ENCODE measurements at regions of chr1 and their contacts with region 1.

Region 1: DNA sequence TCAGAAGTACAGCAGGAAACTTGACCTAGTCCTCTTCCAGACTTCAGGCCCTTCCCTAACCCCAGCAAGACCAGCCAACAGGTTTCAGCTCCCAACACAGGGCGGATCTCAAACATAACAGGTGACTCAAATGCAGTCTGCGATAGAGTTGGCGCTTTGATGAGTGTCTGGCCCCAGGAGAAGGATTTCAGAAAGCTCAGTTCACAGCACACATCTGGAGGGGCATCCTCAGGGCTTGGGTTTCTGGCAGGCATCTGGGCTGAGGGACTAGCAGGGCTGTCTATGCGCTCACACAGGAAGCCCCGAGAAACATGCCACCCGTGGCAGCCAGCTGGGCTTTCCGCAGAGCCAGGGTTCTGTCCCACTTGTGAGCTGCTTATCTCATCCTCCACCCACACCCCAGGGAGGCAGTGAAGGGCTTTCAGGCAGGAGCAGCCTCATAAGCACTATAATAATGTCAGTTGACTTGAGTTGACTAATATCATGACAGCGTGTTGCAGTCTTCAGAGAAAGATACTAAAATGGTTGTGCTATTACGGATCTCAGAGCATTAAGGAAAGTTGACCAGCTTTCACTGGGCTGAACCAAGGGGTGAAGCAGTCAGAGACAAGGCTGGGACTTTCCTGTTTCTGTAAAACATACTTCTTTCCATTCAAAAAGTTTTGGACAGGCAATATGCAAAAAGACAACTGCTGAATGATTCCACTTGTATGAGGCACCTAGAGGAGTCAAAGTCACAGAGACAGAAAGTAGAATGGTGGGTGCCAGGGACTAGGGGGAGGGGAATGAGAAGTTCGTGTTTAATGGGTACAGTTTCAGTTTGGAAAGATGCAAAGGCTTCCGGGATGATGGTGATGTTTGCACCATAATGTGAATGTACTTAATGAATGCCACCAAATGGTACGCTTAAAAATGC is 233.0 kb upstream of the IRF2BP2 start:
- DNase-seq: peak; percentile 95
- ATAC-seq: peak; percentile 74
- H3K4me3 ChIP-seq: peak overlapping the region; percentile 58
- H3K27ac ChIP-seq: peak overlapping the region; percentile 97
- H3K4me1 ChIP-seq: peaks cover 57% of the 10 kb centered on the region
- H3K27me3 ChIP-seq: no peaks in the 10 kb centered on the region
- CTCF ChIP-seq: no peak; a peak in 1 of 6 replicates
- EP300 ChIP-seq: peak in 1 of 2 experiments; percentile 47; a peak in 1 of 4 replicates
- POLR2A ChIP-seq: peak; percentile 81
- RAD21 ChIP-seq: peak; percentile 56

Region 2: DNA sequence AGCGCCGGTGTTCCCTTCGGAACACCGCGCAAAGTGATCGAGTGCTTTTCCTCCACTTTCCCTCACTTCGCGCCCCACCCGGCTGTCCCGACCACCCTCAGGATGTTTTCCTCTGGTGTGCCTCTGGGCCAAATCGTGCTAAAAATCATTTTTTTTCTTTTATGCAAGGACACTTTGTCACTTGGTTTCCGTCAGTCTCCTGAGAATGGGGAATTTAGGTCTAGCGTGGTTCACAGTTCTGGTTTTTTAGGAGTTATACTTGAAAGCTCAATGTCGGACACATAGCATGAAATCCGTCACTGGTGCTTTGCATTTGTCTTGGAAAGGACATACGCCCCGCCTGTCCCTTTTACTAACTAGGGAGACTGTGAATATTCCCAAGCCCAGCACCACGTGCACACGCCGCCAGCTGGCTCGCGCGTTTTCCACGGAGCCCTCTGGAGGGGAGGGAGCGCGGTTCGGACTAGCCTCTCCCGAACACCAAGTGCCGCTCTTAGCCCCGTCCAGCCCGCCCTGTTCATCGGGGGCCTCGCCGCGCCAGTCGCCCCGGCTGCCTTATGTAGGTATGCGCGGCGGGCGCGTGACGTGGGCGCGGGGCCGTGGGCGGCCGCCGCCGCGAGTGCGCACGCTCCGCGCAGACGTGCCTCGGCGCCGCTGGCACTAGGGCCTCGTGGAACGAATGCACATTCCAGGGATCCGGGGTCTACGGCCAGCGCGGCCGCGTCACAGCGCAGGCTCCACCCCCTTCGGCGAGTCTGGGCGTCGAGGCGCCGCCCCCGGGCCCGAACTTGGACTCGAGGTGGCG is 232.4 kb before region 1 on chr1:
- CTCF ChIA-PET with region 1: interaction called, 12 read pairs
- POLR2A ChIA-PET with region 1: interaction called, 14 read pairs
- RAD21 ChIA-PET with region 1: interaction called, 100 read pairs
- SMC1A ChIA-PET with region 1: interaction called, 81 read pairs
- in situ Hi-C with region 1: loop called (anchors 5 kb)
- intact Hi-C with region 1: loop called (anchors 2 kb)
- DNase-seq: peak; percentile 75
- ATAC-seq: peak; percentile 54
- H3K4me3 ChIP-seq: peak overlapping the region; percentile 74
- H3K27ac ChIP-seq: peak overlapping the region; percentile 98
- H3K4me1 ChIP-seq: peaks cover 24% of the 10 kb centered on the region
- H3K27me3 ChIP-seq: no peaks in the 10 kb centered on the region
- CTCF ChIP-seq: no peak
- EP300 ChIP-seq: no peak; a peak in 2 of 4 replicates
- POLR2A ChIP-seq: peak; percentile 97
- RAD21 ChIP-seq: no peak

Region 3: DNA sequence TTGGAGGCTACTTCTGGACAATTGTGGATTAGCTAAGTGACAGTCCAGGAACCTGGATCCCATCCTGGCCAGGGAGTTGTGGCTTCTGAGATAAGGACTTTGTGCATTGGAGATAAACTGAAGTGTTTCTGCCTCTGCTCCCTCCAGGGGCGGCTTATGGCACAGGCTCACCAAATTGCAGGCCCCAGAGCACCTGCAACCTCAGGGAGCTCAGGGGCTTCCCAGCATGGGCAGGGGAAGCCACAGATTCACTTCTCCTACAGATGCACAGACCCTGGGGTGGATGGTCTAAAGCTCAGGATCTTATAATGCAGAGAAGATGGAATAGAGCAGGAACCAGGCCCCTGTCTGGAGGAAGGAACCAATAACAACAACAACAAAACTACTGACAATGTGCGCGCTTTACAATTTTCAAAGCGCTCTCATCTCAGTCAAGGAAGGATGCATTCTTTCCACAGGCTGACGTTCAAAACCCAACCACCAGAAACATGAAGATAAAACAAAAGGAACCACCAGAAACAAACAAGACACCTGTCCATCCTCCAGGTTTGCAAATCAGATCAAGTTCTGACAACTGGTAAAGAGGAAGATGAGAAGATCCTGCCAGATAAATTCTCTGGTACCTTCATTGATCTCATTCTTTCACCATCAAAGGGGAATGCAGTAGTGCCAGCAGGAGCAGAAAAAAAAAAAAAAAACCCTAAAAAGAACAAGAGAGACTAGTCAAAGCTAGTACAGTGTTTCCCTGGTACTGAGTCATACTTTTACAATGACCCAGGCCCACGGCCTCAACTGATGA is 112.0 kb before region 1 on chr1:
- CTCF ChIA-PET with region 1: interaction called, 3 read pairs
- POLR2A ChIA-PET with region 1: interaction called, 5 read pairs
- RAD21 ChIA-PET with region 1: interaction called, 66 read pairs
- SMC1A ChIA-PET with region 1: interaction called, 26 read pairs
- in situ Hi-C with region 1: loop called (anchors 25 kb)
- intact Hi-C with region 1: loop called (anchors 1 kb)
- DNase-seq: peak; percentile 68
- ATAC-seq: peak; percentile 80
- H3K4me3 ChIP-seq: peak overlapping the region; percentile 17; the same call in 1 of the 2 replicates
- H3K27ac ChIP-seq: peak overlapping the region; percentile 82
- H3K4me1 ChIP-seq: peaks cover 59% of the 10 kb centered on the region
- H3K27me3 ChIP-seq: no peaks in the 10 kb centered on the region
- CTCF ChIP-seq: peak; percentile 17 to 30 (median 28); a peak in 3 of 6 replicates
- EP300 ChIP-seq: peak; percentile 53 to 57; a peak in 3 of 4 replicates
- POLR2A ChIP-seq: no peak
- RAD21 ChIP-seq: peak; percentile 46; the same call in 1 of the 2 replicates

Region 4: GRCh38 chr1:234875953-234876855 is 33.2 kb after region 1 on chr1:
- CTCF ChIA-PET with region 1: interaction called, 8 read pairs
- POLR2A ChIA-PET with region 1: interaction called, 7 read pairs
- RAD21 ChIA-PET with region 1: interaction called, 26 read pairs
- SMC1A ChIA-PET with region 1: interaction called, 30 read pairs
- in situ Hi-C with region 1: no loop called
- intact Hi-C with region 1: loop called (anchors 2 kb)
- DNase-seq: no peak
- ATAC-seq: peak; percentile 50
- H3K4me3 ChIP-seq: no peak overlapping the region
- H3K27ac ChIP-seq: no peak overlapping the region
- H3K4me1 ChIP-seq: peaks cover 40% of the 10 kb centered on the region
- H3K27me3 ChIP-seq: no peaks in the 10 kb centered on the region
- CTCF ChIP-seq: no peak
- EP300 ChIP-seq: no peak
- POLR2A ChIP-seq: no peak
- RAD21 ChIP-seq: no peak

Region 5: DNA sequence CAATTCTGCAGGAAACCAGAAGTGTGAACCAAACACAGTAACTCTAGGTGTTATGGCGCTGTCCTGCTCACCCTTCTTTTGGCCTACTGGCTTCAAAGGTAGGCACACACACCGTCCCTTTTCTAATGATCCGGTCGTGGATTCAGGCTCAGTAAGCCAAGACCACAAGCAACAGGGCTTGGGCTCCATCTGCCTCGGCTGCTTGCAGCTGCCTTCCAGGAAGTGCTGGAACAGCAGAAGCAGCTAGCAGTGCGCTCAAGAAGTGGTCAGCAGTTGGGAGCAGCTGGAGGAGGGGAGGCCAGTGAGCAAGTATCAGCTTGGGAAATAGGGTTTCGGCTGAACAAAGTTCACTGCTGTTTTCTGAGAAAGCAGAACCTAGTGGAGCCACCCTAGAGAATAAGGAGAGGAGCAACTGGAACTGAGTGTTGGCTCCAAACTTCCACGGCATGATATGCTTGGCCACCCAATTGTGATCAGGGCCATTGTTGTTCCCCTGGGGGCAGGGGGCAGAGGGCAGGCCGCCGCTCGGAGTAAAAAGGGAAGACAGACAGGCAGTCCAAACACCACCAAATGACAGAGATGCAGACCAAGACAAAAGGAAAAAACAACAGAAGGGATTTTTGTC is 112.2 kb after region 1 on chr1:
- CTCF ChIA-PET with region 1: interaction called, 3 read pairs
- POLR2A ChIA-PET with region 1: interaction called, 11 read pairs
- RAD21 ChIA-PET with region 1: interaction called, 26 read pairs
- SMC1A ChIA-PET with region 1: interaction called, 34 read pairs
- in situ Hi-C with region 1: no loop called
- intact Hi-C with region 1: loop called (anchors 1 kb)
- DNase-seq: no peak
- ATAC-seq: peak; percentile 63
- H3K4me3 ChIP-seq: no peak overlapping the region; the same call in 1 of the 2 replicates
- H3K27ac ChIP-seq: peak overlapping the region; percentile 93
- H3K4me1 ChIP-seq: peaks cover 48% of the 10 kb centered on the region
- H3K27me3 ChIP-seq: no peaks in the 10 kb centered on the region
- CTCF ChIP-seq: no peak
- EP300 ChIP-seq: peak in 1 of 2 experiments; percentile 33; a peak in 1 of 4 replicates
- POLR2A ChIP-seq: 0 out of 2 replicates have a peak, but pooled peaks have one; percentile 43
- RAD21 ChIP-seq: no peak

Region 6: GRCh38 chr1:235011599-235012435 is 168.8 kb after region 1 on chr1:
- CTCF ChIA-PET with region 1: no interaction called
- POLR2A ChIA-PET with region 1: interaction called, 6 read pairs
- RAD21 ChIA-PET with region 1: interaction called, 13 read pairs
- SMC1A ChIA-PET with region 1: interaction called, 23 read pairs
- in situ Hi-C with region 1: no loop called
- intact Hi-C with region 1: loop called (anchors 1 kb)
- DNase-seq: peak; percentile 100
- ATAC-seq: peak; percentile 75
- H3K4me3 ChIP-seq: peak overlapping the region; percentile 46; the same call in 1 of the 2 replicates
- H3K27ac ChIP-seq: peak overlapping the region; percentile 99
- H3K4me1 ChIP-seq: peaks cover 86% of the 10 kb centered on the region
- H3K27me3 ChIP-seq: no peaks in the 10 kb centered on the region
- CTCF ChIP-seq: no peak
- EP300 ChIP-seq: peak; percentile 100
- POLR2A ChIP-seq: peak; percentile 81
- RAD21 ChIP-seq: peak; percentile 30

Region 7: DNA sequence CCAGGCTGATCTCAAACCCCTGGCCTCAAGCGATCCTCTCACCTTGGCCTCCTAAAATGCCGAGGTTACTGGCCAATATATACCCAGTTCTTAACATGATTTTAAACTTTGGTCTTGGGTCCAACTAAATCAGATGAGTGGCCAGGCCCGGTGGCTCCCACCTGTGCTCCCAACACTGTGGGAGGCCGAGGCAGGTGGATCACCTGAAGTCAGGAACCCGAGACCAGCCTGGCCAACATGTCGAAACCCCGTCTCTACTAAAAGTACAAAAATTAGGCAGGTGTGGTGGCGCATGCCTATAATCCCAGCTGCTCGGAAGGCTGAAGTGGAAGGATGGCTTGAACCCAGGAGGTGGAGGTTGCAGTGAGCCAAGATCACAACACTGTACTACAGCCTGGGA is 256.0 kb after region 1 on chr1:
- CTCF ChIA-PET with region 1: no interaction called
- POLR2A ChIA-PET with region 1: no interaction called
- RAD21 ChIA-PET with region 1: no interaction called
- SMC1A ChIA-PET with region 1: no interaction called
- in situ Hi-C with region 1: no loop called
- intact Hi-C with region 1: no loop called
- DNase-seq: no peak
- ATAC-seq: no peak
- H3K4me3 ChIP-seq: no peak overlapping the region
- H3K27ac ChIP-seq: no peak overlapping the region
- H3K4me1 ChIP-seq: peaks cover 6% of the 10 kb centered on the region
- H3K27me3 ChIP-seq: no peaks in the 10 kb centered on the region
- CTCF ChIP-seq: no peak
- EP300 ChIP-seq: no peak
- POLR2A ChIP-seq: no peak
- RAD21 ChIP-seq: no peak